ENCODE measurements at regions of chr5 and their contacts with region 1.

Region 1: DNA sequence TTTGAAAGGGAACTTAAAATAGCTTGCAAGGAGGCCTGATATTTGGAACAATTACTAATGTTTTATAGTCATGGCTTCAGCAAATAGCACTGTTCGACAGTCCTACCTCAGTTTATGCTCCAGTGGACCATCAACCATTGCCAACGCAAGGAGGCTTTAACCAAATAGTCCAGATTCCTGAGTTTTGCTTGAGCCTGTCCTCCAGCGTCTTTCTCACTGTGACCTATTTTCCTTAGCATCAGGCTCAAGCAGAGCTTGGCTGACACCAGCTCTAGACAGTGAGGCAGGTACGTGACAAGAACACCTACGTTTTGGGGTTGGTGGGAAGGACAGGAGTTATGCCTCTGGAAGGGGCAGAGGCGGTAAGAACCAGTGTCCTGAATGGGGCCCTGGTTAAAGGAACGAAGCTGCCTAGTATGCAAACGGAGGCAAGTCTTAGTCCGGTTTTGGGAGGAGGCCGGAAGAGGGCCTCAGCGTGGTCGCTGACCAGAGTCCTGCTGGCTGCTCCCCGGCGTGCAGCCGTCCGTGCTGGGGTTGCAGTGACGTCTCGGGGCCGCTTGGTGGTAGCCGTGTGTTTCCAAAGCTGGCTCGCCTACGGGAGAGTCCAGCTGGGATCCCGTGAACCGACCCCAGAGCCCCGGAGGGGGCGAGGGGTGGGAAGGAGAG is 998 bp upstream of the FGF18 start:
- DNase-seq: peak; percentile 89
- ATAC-seq: peak; percentile 63
- H3K4me3 Mint-ChIP-seq: peak overlapping the region; percentile 74
- H3K27ac Mint-ChIP-seq: no peak overlapping the region
- H3K4me1 Mint-ChIP-seq: peaks cover 25% of the 10 kb centered on the region
- H3K27me3 Mint-ChIP-seq: peaks cover 39% of the 10 kb centered on the region
- CTCF ChIP-seq: peak; percentile 77

Region 2: GRCh38 chr5:171342362-171343111 is 75.9 kb before region 1 on chr5:
- CTCF ChIA-PET with region 1: no interaction called
- POLR2A ChIA-PET with region 1: no interaction called
- DNase-seq: peak; percentile 44
- ATAC-seq: peak; percentile 98
- H3K4me3 Mint-ChIP-seq: no peak overlapping the region
- H3K27ac Mint-ChIP-seq: peak overlapping the region; percentile 74; the same call in 1 of the 2 replicates
- H3K4me1 Mint-ChIP-seq: no peaks in the 10 kb centered on the region
- H3K27me3 Mint-ChIP-seq: peaks cover 10% of the 10 kb centered on the region
- CTCF ChIP-seq: peak; percentile 60

Region 3: DNA sequence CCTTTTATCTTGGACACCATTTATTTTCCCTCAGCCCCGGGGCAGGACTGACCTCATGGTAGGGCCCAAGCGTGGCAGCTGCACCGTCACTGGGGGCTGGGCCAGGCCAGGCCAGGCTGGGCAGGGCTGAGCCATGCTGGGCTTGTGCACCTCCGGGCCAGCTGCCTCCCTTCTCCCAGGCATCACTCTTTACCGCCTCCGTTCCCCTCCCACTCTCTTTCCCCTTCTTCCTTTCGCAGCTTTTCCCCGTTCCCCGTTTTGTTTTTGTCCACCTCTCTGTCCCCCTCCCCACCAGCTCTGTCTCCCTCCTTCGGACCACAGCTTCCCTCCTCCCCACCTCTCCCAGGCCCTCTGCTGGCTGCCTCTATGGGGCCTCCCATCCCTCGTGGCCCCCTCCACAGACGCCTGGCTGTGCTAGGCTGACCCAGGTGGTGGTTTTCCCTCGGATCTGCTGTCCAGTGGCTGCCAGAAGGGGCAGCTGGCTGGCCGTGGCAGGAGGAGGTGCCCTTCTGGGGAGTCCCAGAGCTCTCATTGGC is 18.9 kb after region 1 on chr5:
- CTCF ChIA-PET with region 1: interaction called, 37 read pairs
- POLR2A ChIA-PET with region 1: no interaction called
- DNase-seq: peak; percentile 30
- ATAC-seq: peak; percentile 63
- H3K4me3 Mint-ChIP-seq: no peak overlapping the region
- H3K27ac Mint-ChIP-seq: no peak overlapping the region
- H3K4me1 Mint-ChIP-seq: peaks cover 42% of the 10 kb centered on the region
- H3K27me3 Mint-ChIP-seq: no peaks in the 10 kb centered on the region
- CTCF ChIP-seq: no peak

Region 4: DNA sequence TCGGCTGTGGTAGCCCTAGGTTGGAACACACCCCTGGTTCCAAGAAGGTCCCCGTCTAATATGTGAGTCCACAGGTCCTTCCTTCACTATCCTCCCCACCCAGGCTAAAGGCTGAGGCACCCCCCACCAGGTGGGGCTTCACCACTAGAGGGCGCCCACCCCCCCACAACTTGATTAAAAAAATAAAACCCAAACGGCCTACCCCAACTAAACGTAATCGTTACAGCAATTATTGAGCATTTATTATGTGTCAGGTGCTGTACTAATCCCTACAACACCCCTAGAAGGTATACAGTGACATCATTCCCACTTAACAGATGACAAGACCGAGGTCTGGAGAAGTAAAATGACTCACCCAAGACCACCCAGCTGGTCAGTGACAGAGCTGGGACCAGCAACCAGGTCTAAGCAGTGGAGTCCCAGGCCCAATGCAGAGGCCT is 66.0 kb after region 1 on chr5:
- CTCF ChIA-PET with region 1: interaction called, 42 read pairs
- POLR2A ChIA-PET with region 1: no interaction called
- DNase-seq: peak; percentile 44
- ATAC-seq: peak; percentile 67
- H3K4me3 Mint-ChIP-seq: no peak overlapping the region
- H3K27ac Mint-ChIP-seq: no peak overlapping the region
- H3K4me1 Mint-ChIP-seq: peaks cover 17% of the 10 kb centered on the region
- H3K27me3 Mint-ChIP-seq: no peaks in the 10 kb centered on the region
- CTCF ChIP-seq: peak; percentile 73

Region 5: DNA sequence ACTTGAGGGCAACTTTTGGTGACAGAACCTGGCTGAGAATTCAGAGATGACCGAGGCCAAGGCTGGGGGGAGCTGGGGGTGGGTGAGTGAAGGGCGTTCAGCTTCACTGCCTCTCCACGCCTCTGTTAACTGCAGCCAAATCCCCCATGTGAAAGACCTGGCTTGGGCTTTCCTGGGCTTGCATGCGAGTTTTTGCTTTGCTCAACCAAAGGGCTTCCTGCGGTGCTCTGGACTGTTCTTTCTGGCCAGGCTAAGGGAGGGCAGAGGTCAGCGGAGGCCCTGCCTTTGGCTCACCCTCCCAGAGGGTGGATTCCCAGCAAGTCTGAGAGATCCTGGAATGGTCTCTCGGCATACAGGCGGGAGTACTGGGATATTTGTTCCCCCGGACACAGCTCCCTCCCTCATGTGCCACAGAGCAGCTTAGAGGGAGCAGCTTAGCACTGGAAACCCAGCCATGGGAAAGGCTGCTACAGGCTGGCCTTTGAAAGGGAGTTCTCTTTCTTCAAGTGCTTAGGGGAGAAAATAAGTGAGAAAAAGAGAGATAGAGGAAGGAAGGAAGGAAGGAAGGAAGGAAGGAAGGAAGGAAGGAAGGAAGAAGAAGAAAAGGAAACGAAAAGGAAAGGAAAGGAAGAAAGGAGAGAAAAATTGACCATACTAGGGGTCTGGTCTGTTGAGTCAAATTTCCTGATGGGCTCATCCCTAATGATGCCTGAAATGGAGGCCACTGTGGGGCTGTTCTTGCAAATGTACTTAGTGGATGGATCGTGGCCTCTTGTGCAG is 159.8 kb after region 1 on chr5:
- CTCF ChIA-PET with region 1: interaction called, 11 read pairs
- POLR2A ChIA-PET with region 1: no interaction called
- DNase-seq: no peak
- ATAC-seq: peak; percentile 40; the same call in 1 of the 2 replicates
- H3K4me3 Mint-ChIP-seq: no peak overlapping the region
- H3K27ac Mint-ChIP-seq: no peak overlapping the region
- H3K4me1 Mint-ChIP-seq: peaks cover 12% of the 10 kb centered on the region
- H3K27me3 Mint-ChIP-seq: no peaks in the 10 kb centered on the region
- CTCF ChIP-seq: no peak

Region 6: GRCh38 chr5:171614971-171615653 is 196.7 kb after region 1 on chr5:
- CTCF ChIA-PET with region 1: interaction called, 12 read pairs
- POLR2A ChIA-PET with region 1: interaction called, 3 read pairs
- DNase-seq: peak; percentile 60
- ATAC-seq: peak; percentile 90
- H3K4me3 Mint-ChIP-seq: no peak overlapping the region
- H3K27ac Mint-ChIP-seq: no peak overlapping the region
- H3K4me1 Mint-ChIP-seq: peaks cover 25% of the 10 kb centered on the region
- H3K27me3 Mint-ChIP-seq: peaks cover 67% of the 10 kb centered on the region
- CTCF ChIP-seq: no peak

Region 7: GRCh38 chr5:171630027-171630669 is 211.7 kb after region 1 on chr5:
- CTCF ChIA-PET with region 1: interaction called, 16 read pairs
- POLR2A ChIA-PET with region 1: no interaction called
- DNase-seq: peak; percentile 77
- ATAC-seq: peak; percentile 99
- H3K4me3 Mint-ChIP-seq: peak overlapping the region; percentile 60
- H3K27ac Mint-ChIP-seq: no peak overlapping the region
- H3K4me1 Mint-ChIP-seq: peaks cover 25% of the 10 kb centered on the region
- H3K27me3 Mint-ChIP-seq: peaks cover 67% of the 10 kb centered on the region
- CTCF ChIP-seq: no peak

Measured in WTC11 (cell line).